Endothelial cell of umbilical vein (primary cell): ENCODE measurements at regions of chr10 and their contacts with region 1.

Region 1: DNA sequence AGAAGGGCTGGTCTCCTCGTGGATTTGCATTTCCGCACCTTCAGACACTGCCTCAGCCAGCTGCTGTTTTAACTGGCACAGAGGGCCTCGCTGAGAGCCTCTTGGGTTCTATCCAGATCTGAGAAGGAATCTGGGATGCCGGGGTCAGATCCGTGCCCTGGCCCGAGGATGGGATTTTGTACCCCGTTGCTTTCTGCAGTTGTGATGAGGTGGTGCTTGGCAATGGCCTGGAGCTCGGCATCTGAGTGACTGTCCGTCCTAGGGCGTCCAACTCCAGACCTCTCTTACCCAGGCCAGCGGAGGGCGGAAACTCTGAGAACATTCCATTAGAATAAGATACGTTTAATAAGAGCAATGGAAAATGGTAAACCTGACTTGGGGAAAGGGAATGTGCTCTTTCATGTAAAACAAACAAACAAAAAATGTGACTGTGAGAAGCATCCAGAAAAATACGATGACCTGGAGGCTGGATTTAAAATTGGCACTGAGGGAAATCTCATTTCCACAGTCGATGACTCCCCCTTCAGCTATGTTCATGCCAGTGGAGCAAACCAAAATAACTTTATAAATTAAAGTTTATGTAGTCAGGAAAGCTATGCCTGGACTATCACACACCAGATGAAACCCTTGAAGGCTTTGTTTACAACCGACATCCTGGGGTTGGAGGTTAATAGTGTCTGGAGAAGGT is 39.6 kb downstream of the GRK5 start:
- DNase-seq: peak; percentile 90
- H3K4me3 ChIP-seq: no peak overlapping the region
- H3K27ac ChIP-seq: peak overlapping the region; percentile 54
- H3K4me1 ChIP-seq: peaks cover 40% of the 10 kb centered on the region
- H3K27me3 ChIP-seq: no peaks in the 10 kb centered on the region
- CTCF ChIP-seq: no peak
- POLR2A ChIP-seq: no peak

Region 2: GRCh38 chr10:119235356-119235755 is 11.7 kb before region 1 on chr10:
- CTCF ChIA-PET with region 1: interaction called, 9 read pairs
- POLR2A ChIA-PET with region 1: no interaction called
- dilution Hi-C with region 1: no loop called
- intact Hi-C with region 1: loop called (anchors 1 kb)
- DNase-seq: peak; percentile 62
- H3K4me3 ChIP-seq: no peak overlapping the region
- H3K27ac ChIP-seq: peak overlapping the region; percentile 56
- H3K4me1 ChIP-seq: peaks cover 49% of the 10 kb centered on the region
- H3K27me3 ChIP-seq: no peaks in the 10 kb centered on the region
- CTCF ChIP-seq: no peak
- POLR2A ChIP-seq: no peak